ENCODE measurements at regions of chr18 and their contacts with region 1.

Region 1: DNA sequence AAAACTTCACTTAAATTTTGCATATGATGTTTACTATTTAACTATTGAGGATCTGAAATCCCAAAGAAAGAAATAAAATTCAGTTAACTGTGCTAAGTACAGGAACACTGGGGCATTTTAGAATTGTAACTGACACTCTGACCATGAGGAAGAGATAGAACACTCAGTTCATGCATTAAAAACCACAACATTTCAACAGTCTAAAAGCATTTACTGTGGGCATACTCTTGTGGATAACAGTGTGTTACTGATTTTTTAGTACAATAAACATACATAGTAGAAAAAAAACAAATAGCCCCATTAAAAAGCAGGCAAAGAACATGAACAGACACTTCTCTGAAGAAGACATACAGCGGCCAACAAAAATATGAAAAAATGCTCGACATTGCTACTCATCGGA is 1122.7 kb upstream of the PIK3C3 start:
- DNase-seq: no peak
- ATAC-seq: no peak

Region 2: GRCh38 chr18:40197711-40198110 is 634.7 kb before region 1 on chr18:
- intact Hi-C with region 1: no loop called
- DNase-seq: no peak
- ATAC-seq: no peak

Region 3: GRCh38 chr18:40769786-40770185 is 62.6 kb before region 1 on chr18:
- intact Hi-C with region 1: loop called in 1 of 2 experiments (anchors 10 kb)
- DNase-seq: no peak
- ATAC-seq: no peak

Region 4: GRCh38 chr18:40984856-40985255 is 152.5 kb after region 1 on chr18:
- intact Hi-C with region 1: no loop called
- DNase-seq: no peak
- ATAC-seq: no peak

Region 5: GRCh38 chr18:41357708-41358107 is 525.3 kb after region 1 on chr18:
- intact Hi-C with region 1: no loop called
- DNase-seq: no peak
- ATAC-seq: no peak

Measured in left cardiac atrium (tissue), 4 donors.